ENCODE measurements at regions of chr4 and their contacts with region 1.

Region 1: GRCh38 chr4:39987485-39987884 is 9.8 kb upstream of the PDS5A start:
- DNase-seq: no peak
- ATAC-seq: no peak
- H3K4me3 ChIP-seq: no peak overlapping the region
- H3K27ac ChIP-seq: no peak overlapping the region
- H3K4me1 ChIP-seq: no peaks in the 10 kb centered on the region
- H3K27me3 ChIP-seq: no peaks in the 10 kb centered on the region

Region 2: DNA sequence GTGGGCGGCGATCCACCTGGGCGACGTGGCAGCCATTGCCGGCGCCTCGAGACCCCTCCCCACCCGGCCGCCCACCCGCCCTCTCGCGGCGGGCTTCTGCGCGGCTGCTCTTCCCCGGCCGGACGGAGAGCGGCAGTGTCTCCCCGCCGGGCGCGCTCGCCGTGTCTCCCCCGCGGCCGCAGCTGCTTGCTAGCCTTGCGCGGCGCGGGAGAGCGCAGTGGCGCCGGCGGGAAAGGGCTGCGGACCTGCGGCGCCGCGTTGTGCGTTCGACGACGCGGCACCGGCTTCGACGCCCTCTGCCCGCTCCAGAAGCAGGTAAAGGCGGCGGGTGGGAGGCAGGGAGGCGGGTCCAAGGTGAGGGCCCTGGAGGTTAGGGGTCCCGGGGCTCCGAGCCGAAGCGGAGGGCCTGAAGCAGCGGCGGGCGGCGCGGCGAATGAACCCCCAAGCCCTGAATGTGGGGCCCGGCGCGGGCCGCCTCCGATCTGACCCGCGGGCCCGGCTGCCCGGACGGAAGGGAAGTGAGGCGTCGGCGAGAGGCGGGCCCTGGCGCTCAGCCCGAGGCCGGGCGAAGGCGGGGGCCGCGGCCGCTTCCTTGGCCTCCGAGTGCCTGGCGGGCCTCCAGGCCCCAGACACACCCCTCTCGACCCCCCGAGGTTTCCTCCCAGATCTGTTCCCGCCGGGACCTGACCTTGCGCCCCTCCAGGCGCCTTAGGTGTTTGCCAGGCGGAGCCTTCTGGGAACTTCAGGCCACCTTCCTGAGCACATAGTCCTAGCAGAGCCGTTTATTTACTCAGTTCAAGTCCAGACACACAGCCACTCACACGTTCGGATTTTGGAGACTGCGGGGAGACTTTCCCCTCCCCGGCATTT is 69.5 kb after region 1 on chr4 and contains the start of gene N4BP2:
- intact Hi-C with region 1: loop called in 1 of 4 experiments (anchors 10 kb)
- DNase-seq: peak; percentile 88 to 96 (median 95)
- ATAC-seq: peak; percentile 88 to 90
- H3K4me3 ChIP-seq: peak within 1 kb of the TSS; percentile 74
- H3K27ac ChIP-seq: peak within 1 kb of the TSS; percentile 97
- H3K4me1 ChIP-seq: no peaks in the 10 kb centered on the region
- H3K27me3 ChIP-seq: no peaks in the 10 kb centered on the region
- total RNA-seq, gene N4BP2: 5.6 to 7.3 (median 6.2) TPM

Measured in right cardiac atrium (tissue), 5 donors.